ENCODE measurements at regions of chr10 and their contacts with region 1.

Region 1: DNA sequence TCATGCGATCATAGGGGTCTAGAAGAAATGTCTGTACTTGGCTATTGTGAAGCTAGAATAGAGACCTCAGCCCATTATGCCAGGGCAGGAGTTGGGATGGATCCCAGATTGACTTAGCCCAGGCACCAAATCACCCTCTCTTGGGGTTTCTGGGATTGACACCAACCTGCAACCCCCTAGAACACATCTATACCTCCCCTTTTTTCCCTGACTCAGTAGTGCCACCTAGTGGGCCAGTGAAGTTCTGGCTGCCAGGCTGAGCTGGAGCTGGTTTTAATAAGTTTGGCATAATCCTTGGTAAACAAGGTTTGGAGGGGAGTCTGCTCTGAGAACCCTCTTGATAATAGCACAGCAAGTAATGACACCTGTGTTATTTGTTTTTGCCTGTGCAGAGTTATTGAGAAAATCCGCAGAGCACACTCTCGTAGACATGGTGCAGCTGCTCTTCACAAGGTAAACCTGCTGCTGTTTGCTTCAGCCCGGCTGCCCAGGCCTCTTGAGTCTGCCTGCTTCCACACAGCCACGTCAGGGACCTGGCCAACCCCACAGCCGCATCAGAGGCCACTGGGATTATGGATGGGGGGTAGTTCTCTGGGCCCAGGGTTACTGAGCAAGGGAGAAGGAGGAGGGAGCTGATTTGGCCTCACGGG is 43.3 kb upstream of the NFKB2 start:
- DNase-seq: peak; percentile 60 to 71 (median 67)
- H3K4me3 ChIP-seq: no peak overlapping the region
- H3K4me3 Mint-ChIP-seq: no peak overlapping the region
- H3K27ac ChIP-seq: no peak overlapping the region
- H3K27ac Mint-ChIP-seq: peak overlapping the region in 1 of 7 donors; percentile 25
- H3K4me1 ChIP-seq: no peaks in the 10 kb centered on the region
- H3K4me1 Mint-ChIP-seq: peaks cover 0 to 4% (median 1%) of the 10 kb centered on the region in 4 donors
- H3K27me3 ChIP-seq: no peaks in the 10 kb centered on the region
- H3K27me3 Mint-ChIP-seq: no peaks in the 10 kb centered on the region

Region 2: GRCh38 chr10:102167861-102168260 is 184.3 kb before region 1 on chr10:
- CTCF ChIA-PET with region 1: interaction called, 62 read pairs
- POLR2A ChIA-PET with region 1: interaction called, 3 read pairs
- intact Hi-C with region 1: loop called (anchors 1 kb)
- DNase-seq: no peak
- H3K4me3 ChIP-seq: no peak overlapping the region
- H3K4me3 Mint-ChIP-seq: no peak overlapping the region
- H3K27ac ChIP-seq: no peak overlapping the region
- H3K27ac Mint-ChIP-seq: peak overlapping the region in 1 of 7 donors; percentile 36
- H3K4me1 ChIP-seq: peaks cover 4% of the 10 kb centered on the region
- H3K4me1 Mint-ChIP-seq: peaks cover 4 to 11% (median 6%) of the 10 kb centered on the region in 4 donors
- H3K27me3 ChIP-seq: no peaks in the 10 kb centered on the region
- H3K27me3 Mint-ChIP-seq: no peaks in the 10 kb centered on the region

Region 3: DNA sequence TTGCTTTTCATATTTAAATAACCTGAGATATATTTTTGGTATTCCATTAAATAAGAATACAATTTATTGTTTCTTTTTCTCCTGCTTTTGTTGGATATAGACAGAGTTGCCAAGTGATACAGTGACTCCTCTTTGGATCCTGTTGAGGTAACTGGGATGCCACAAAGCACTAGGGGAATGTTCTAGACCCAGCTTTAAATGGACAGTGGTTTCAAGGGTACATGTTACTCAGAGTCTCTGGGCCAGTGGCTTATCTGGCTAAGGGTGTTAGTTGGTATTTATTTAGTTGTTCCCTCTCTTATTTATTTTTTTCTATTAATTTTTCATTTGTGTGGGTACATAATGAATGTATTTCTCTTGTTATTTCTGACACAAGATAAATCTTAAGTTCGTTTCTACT is 97.8 kb before region 1 on chr10:
- CTCF ChIA-PET with region 1: interaction called, 19 read pairs
- POLR2A ChIA-PET with region 1: no interaction called
- intact Hi-C with region 1: no loop called
- DNase-seq: no peak
- H3K4me3 ChIP-seq: no peak overlapping the region
- H3K4me3 Mint-ChIP-seq: no peak overlapping the region
- H3K27ac ChIP-seq: no peak overlapping the region
- H3K27ac Mint-ChIP-seq: no peak overlapping the region
- H3K4me1 ChIP-seq: peaks cover 9% of the 10 kb centered on the region
- H3K4me1 Mint-ChIP-seq: peaks cover 12 to 24% (median 13%) of the 10 kb centered on the region in 4 donors
- H3K27me3 ChIP-seq: no peaks in the 10 kb centered on the region
- H3K27me3 Mint-ChIP-seq: no peaks in the 10 kb centered on the region

Region 4: DNA sequence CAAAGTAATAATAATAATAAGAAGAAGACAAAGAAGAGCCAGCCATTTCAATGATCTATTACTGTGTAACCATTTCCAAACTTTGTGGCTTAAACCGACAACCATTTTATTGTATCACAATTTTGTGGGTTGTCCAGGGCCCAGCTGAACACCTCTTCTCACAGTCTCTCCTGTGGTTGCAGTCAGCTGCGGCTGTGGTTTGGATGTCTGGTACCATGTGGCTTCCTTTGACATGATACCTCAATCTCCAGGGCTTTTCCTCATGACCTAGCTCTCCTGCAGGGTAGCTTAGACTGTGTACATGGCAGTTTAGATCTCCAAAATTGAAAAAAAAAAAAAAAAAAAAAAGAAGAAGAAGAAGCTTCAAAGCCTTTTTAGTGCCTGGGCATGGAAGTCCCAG is 29.3 kb before region 1 on chr10:
- CTCF ChIA-PET with region 1: interaction called, 16 read pairs
- POLR2A ChIA-PET with region 1: no interaction called
- intact Hi-C with region 1: no loop called
- DNase-seq: peak; percentile 31 to 73 (median 46)
- H3K4me3 ChIP-seq: no peak overlapping the region
- H3K4me3 Mint-ChIP-seq: peak overlapping the region in 3 of 8 donors; percentile 12 to 52 (median 23)
- H3K27ac ChIP-seq: no peak overlapping the region
- H3K27ac Mint-ChIP-seq: peak overlapping the region in 5 of 7 donors; percentile 15 to 65 (median 61)
- H3K4me1 ChIP-seq: peaks cover 18% of the 10 kb centered on the region
- H3K4me1 Mint-ChIP-seq: peaks cover 23 to 53% (median 32%) of the 10 kb centered on the region in 4 donors
- H3K27me3 ChIP-seq: no peaks in the 10 kb centered on the region
- H3K27me3 Mint-ChIP-seq: no peaks in the 10 kb centered on the region

Region 5: DNA sequence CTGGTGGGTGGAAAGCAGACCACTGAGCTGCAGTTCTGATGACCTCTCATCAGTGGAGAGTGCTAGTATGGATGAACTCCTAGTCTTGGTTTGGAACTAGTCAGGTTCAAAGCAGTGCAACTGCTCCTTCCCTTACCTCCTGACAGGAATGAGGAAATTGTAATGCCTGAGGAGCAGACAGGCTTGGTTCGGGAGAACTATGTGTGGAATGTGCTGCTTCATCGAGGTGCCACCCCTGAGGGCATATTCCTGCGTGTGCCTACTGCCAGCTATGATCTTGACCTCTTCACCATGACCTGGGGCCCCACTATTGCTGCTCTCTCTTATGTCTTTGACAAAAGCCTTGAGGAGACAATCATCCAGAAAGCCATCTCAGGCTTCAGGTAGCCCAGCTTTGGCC is 15.9 kb after region 1 on chr10:
- CTCF ChIA-PET with region 1: interaction called, 26 read pairs
- POLR2A ChIA-PET with region 1: no interaction called
- intact Hi-C with region 1: no loop called
- DNase-seq: no peak
- H3K4me3 ChIP-seq: no peak overlapping the region
- H3K4me3 Mint-ChIP-seq: no peak overlapping the region
- H3K27ac ChIP-seq: no peak overlapping the region
- H3K27ac Mint-ChIP-seq: peak overlapping the region in 3 of 7 donors; percentile 10 to 60 (median 35)
- H3K4me1 ChIP-seq: no peaks in the 10 kb centered on the region
- H3K4me1 Mint-ChIP-seq: no peaks in the 10 kb centered on the region
- H3K27me3 ChIP-seq: no peaks in the 10 kb centered on the region
- H3K27me3 Mint-ChIP-seq: no peaks in the 10 kb centered on the region

Region 6: DNA sequence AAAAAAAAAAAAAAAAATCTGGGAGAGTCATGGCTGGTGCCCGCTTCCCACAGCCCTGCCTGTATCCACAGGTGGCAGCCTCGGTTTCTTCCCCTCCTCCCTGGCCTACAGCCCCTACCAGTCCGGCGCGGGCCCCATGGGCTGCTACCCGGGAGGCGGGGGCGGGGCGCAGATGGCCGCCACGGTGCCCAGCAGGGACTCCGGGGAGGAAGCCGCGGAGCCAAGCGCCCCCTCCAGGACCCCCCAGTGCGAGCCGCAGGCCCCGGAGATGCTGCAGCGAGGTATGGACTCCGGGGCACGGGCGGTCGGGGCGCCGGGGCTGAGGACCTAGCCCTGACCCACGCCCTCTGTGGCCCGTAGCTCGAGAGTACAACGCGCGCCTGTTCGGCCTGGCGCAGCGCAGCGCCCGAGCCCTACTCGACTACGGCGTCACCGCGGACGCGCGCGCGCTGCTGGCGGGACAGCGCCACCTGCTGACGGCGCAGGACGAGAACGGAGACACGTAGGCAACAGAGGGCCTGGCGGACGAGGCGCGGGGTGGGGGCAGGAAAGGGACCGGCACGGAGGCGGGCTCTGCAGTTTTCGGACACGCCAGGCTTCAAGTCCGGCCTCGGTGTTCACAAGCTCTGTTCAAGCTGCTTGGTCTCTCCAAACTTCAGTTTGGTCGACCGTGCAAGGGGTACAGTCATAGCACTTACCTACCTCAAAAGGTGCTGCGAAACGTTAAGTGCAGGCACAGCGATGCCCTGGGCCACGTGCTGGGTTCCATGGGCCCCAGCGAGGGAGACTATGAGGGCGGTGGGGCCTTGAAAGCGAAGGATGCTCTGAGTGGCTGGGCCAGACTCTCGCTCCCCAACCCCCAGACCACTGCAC is 47.3 kb after region 1 on chr10:
- CTCF ChIA-PET with region 1: interaction called, 4 read pairs
- POLR2A ChIA-PET with region 1: interaction called, 5 read pairs
- intact Hi-C with region 1: loop called (anchors 1 kb)
- DNase-seq: peak; percentile 86 to 90 (median 87)
- H3K4me3 ChIP-seq: peak overlapping the region in 1 of 2 donors; percentile 49
- H3K4me3 Mint-ChIP-seq: peak overlapping the region; percentile 53 to 81 (median 74)
- H3K27ac ChIP-seq: peak overlapping the region; percentile 100
- H3K27ac Mint-ChIP-seq: peak overlapping the region; percentile 89 to 100 (median 100)
- H3K4me1 ChIP-seq: peaks cover 44% of the 10 kb centered on the region
- H3K4me1 Mint-ChIP-seq: peaks cover 19 to 68% (median 32%) of the 10 kb centered on the region in 4 donors
- H3K27me3 ChIP-seq: no peaks in the 10 kb centered on the region
- H3K27me3 Mint-ChIP-seq: no peaks in the 10 kb centered on the region

Measured in CD4-positive, alpha-beta memory T cell (primary cell).